ENCODE measurements at regions of chr1 and their contacts with region 1.

Region 1: DNA sequence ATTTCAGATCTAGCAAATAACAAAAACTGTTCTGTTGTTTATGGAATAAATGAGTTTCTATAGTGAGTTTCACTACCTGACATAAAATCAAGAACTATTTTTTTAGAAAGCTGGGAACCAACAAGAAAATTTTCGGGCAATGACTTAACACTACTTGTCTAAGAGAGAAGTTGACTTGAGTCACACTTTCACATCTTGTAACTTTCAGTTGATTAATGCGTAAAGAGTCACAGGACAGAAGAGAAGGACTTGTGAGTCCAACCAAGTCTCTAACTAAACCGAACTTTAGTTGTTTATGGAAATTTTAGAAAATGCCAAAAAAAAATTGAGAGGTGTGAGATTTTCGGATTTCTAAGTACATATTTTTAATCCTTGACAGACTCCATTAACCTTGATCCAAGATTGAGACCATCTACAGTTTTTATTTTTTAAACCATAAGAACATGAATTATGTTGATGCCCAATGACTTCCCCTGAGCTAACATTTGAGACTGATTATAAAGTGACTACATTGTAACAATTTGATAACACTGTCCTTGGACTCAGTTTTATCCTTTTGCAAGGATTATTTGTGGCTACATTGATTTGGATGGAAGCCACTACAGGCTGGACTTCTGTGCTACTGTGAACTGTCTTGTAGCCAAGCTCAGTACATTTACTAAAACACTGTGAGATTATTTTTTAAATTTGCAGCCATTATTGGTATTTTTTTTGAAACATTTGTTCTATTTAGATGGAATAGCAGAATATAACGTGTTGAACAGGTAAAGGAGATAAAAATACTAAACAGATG is 284.0 kb downstream of the PTPRC start:
- DNase-seq: no peak
- H3K4me3 Mint-ChIP-seq: no peak overlapping the region
- H3K27ac Mint-ChIP-seq: peak overlapping the region; percentile 66
- H3K4me1 Mint-ChIP-seq: peaks cover 58% of the 10 kb centered on the region
- H3K27me3 Mint-ChIP-seq: no peaks in the 10 kb centered on the region

Region 2: DNA sequence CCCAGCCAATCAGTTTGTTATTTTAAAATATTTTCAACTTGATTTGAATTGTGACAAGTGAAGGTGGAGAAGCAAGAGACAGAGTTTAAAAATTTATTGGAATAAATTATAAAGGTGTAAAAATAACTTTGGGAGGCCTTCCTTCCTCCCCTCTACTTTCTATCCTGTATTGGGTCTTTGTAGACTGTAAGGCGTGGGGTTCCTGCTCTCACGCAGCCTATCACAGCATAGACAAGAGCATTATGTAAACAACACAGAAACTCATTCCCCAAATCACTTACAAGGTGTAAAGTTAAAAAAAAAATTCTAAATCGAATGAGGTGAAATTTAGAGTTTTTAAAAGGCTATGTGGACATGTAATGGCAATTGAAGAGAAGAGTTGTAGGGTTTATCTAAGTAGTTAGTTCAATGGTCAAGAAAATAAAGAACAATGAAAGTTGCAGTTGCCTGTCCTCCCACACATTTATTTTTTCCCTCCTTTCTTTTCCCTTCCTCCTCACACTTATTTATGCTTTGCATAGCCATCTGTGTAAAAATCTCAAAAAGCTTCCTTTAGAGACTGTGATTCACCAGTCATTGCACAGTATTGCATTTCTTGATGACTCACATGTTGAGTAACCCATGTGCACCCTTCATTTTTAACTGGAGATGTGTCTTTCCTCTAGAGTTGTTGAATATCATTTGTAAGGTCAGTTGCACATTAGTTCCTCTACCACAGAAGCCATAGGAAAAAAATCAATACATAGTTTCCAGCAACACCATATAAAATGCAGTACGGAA is 41.8 kb before region 1 on chr1:
- CTCF ChIA-PET with region 1: no interaction called
- POLR2A ChIA-PET with region 1: no interaction called
- intact Hi-C with region 1: loop called (anchors 1 kb)
- DNase-seq: no peak
- H3K4me3 Mint-ChIP-seq: no peak overlapping the region
- H3K27ac Mint-ChIP-seq: peak overlapping the region; percentile 26
- H3K4me1 Mint-ChIP-seq: peaks cover 13% of the 10 kb centered on the region
- H3K27me3 Mint-ChIP-seq: no peaks in the 10 kb centered on the region

Region 3: GRCh38 chr1:199041173-199041914 is 118.5 kb after region 1 on chr1:
- CTCF ChIA-PET with region 1: no interaction called
- POLR2A ChIA-PET with region 1: no interaction called
- intact Hi-C with region 1: loop called (anchors 5 kb)
- DNase-seq: peak; percentile 18
- H3K4me3 Mint-ChIP-seq: no peak overlapping the region
- H3K27ac Mint-ChIP-seq: peak overlapping the region; percentile 49
- H3K4me1 Mint-ChIP-seq: peaks cover 21% of the 10 kb centered on the region
- H3K27me3 Mint-ChIP-seq: no peaks in the 10 kb centered on the region

Region 4: DNA sequence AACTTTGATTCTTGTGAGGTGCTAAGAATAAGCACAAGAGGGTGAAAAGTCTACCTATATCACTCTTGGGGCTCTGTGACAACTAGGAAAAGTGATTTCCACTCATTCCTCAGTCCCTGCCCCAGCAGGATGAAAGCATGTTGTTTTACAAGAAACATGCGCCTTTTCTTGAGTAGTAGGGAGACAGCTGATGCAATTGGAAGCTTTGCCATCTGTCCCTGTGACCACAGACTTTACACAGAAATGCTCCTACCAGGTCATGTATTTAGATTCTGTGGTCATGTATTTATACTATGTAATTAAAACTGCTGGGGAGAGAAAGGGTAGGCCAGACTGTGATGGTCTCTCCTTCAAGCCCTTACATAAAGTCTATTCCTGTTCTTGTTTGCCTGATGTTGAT is 161.5 kb after region 1 on chr1:
- CTCF ChIA-PET with region 1: no interaction called
- POLR2A ChIA-PET with region 1: no interaction called
- intact Hi-C with region 1: loop called (anchors 5 kb)
- DNase-seq: no peak
- H3K4me3 Mint-ChIP-seq: no peak overlapping the region
- H3K27ac Mint-ChIP-seq: no peak overlapping the region
- H3K4me1 Mint-ChIP-seq: peaks cover 7% of the 10 kb centered on the region
- H3K27me3 Mint-ChIP-seq: no peaks in the 10 kb centered on the region

Region 5: GRCh38 chr1:199173356-199173755 is 250.5 kb after region 1 on chr1:
- CTCF ChIA-PET with region 1: no interaction called
- POLR2A ChIA-PET with region 1: interaction called, 5 read pairs
- intact Hi-C with region 1: loop called (anchors 1 kb)
- DNase-seq: no peak
- H3K4me3 Mint-ChIP-seq: no peak overlapping the region
- H3K27ac Mint-ChIP-seq: no peak overlapping the region
- H3K4me1 Mint-ChIP-seq: peaks cover 49% of the 10 kb centered on the region
- H3K27me3 Mint-ChIP-seq: no peaks in the 10 kb centered on the region

Region 6: GRCh38 chr1:199308331-199308846 is 385.6 kb after region 1 on chr1:
- CTCF ChIA-PET with region 1: no interaction called
- POLR2A ChIA-PET with region 1: no interaction called
- intact Hi-C with region 1: loop called (anchors 2 kb)
- DNase-seq: no peak
- H3K4me3 Mint-ChIP-seq: no peak overlapping the region
- H3K27ac Mint-ChIP-seq: no peak overlapping the region
- H3K4me1 Mint-ChIP-seq: peaks cover 13% of the 10 kb centered on the region
- H3K27me3 Mint-ChIP-seq: peaks cover 41% of the 10 kb centered on the region